Sigmoid colon (tissue), 7 donors: ENCODE measurements at regions of chr10 and their contacts with region 1.

Region 1: DNA sequence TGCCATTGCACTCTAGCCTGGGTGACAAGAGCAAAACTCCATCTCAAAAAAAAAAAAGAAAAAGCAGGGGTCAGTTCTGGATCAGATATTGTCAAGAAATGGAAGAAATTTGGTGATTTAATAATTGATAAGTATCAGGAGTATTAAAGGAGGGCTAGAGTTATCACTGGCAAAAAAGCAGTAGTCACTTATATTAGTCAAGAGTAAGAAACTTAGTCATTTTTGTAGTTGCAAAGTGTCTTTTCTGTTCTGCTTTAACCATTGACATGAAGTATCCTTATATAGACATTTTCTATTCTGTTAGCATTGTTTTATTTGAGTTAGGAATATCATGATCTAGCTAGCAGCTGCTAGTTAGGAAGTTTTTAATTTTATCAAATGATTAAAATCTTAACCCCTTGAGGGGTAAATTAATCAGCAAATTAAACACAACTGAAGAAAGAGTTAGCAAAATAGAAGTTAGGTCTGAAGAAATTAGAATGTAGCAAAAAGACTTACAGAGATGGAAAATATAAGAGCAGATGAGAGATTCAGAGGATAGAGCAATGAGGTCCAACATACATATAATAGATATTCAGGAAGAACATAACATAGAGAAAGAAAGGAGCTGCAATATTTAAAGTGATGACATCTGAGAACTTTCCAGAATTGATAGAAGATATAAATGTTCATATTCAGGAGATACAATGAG is 7.3 kb upstream of the CCDC6 start:
- DNase-seq: no peak
- H3K4me3 ChIP-seq: no peak overlapping the region
- H3K27ac ChIP-seq: no peak overlapping the region
- H3K4me1 ChIP-seq: peaks cover 0 to 12% (median 7%) of the 10 kb centered on the region in 4 donors
- H3K27me3 ChIP-seq: no peaks in the 10 kb centered on the region
- CTCF ChIP-seq: no peak
- EP300 ChIP-seq: no peak
- POLR2A ChIP-seq: no peak

Region 2: DNA sequence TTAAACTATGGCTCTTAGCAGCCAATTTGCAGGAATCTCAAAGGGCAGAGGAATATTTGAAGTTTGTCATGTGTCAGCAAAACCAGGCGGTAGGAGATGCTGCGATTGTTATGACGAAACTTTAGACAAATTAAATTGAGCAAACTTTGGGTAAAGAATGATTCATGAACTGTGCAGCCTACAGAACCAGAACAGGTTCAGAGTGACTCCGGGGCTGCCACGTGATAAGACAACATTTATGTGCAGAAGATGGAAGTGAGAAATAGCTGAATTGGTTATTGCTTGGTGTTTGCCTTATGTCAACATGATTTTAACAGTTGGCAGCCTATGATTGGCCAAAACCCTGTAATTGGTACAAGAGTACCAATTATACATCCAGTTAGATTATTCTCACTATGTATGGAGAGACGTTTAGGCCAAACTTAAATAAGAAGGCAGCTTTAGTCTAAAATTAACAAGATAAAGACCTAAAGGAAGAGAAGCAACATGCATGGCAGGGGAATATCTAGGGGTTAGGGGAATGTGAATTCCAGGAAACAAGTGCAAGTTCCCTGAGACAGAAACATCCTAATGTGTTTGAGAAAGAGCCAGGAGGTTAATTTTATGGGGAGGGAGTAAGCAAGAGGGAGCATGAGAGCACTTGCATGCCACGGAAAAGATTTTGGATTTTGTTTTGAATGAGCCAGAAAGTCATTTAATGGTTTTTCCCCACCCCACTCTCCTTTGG is 32.1 kb after region 1 on chr10:
- intact Hi-C with region 1: loop called (anchors 1 kb)
- DNase-seq: no peak
- H3K4me3 ChIP-seq: no peak overlapping the region
- H3K27ac ChIP-seq: no peak overlapping the region
- H3K4me1 ChIP-seq: no peaks in the 10 kb centered on the region
- H3K27me3 ChIP-seq: no peaks in the 10 kb centered on the region
- CTCF ChIP-seq: no peak
- EP300 ChIP-seq: no peak
- POLR2A ChIP-seq: no peak